ENCODE measurements at regions of chr16 and their contacts with region 1.

Region 1: GRCh38 chr16:12535535-12536411 is 267.9 kb downstream of the CPPED1 start:
- DNase-seq: peak in 4 of 9 donors; percentile 23 to 46 (median 37)
- ATAC-seq: peak; percentile 40
- H3K4me3 ChIP-seq: no peak overlapping the region
- H3K4me3 Mint-ChIP-seq: peak overlapping the region in 9 of 10 donors; percentile 7 to 70 (median 50)
- H3K27ac ChIP-seq: no peak overlapping the region
- H3K27ac Mint-ChIP-seq: peak overlapping the region in 5 of 9 donors; percentile 5 to 94 (median 68)
- H3K4me1 ChIP-seq: peaks cover 15 to 40% of the 10 kb centered on the region in 2 donors
- H3K4me1 Mint-ChIP-seq: peaks cover 44 to 96% (median 72%) of the 10 kb centered on the region in 7 donors
- H3K27me3 ChIP-seq: no peaks in the 10 kb centered on the region
- H3K27me3 Mint-ChIP-seq: no peaks in the 10 kb centered on the region

Region 2: GRCh38 chr16:12089492-12090150 is 446.2 kb before region 1 on chr16:
- CTCF ChIA-PET with region 1: no interaction called
- POLR2A ChIA-PET with region 1: no interaction called
- intact Hi-C with region 1: loop called in 1 of 2 experiments (anchors 10 kb)
- DNase-seq: peak; percentile 20 to 60 (median 49)
- ATAC-seq: peak; percentile 89
- H3K4me3 ChIP-seq: peak overlapping the region; percentile 71
- H3K4me3 Mint-ChIP-seq: peak overlapping the region; percentile 81 to 98 (median 86)
- H3K27ac ChIP-seq: peak overlapping the region; percentile 76
- H3K27ac Mint-ChIP-seq: peak overlapping the region; percentile 87 to 99 (median 97)
- H3K4me1 ChIP-seq: peaks cover 0 to 30% of the 10 kb centered on the region in 2 donors
- H3K4me1 Mint-ChIP-seq: peaks cover 25 to 63% (median 57%) of the 10 kb centered on the region in 7 donors
- H3K27me3 ChIP-seq: no peaks in the 10 kb centered on the region
- H3K27me3 Mint-ChIP-seq: no peaks in the 10 kb centered on the region

Region 3: GRCh38 chr16:12455287-12455798 is 80.4 kb before region 1 on chr16:
- CTCF ChIA-PET with region 1: interaction called, 6 read pairs
- POLR2A ChIA-PET with region 1: no interaction called
- intact Hi-C with region 1: loop called in 1 of 2 experiments (anchors 5 kb)
- DNase-seq: peak in 6 of 9 donors; percentile 19 to 55 (median 22)
- ATAC-seq: peak; percentile 54
- H3K4me3 ChIP-seq: no peak overlapping the region
- H3K4me3 Mint-ChIP-seq: no peak overlapping the region
- H3K27ac ChIP-seq: no peak overlapping the region
- H3K27ac Mint-ChIP-seq: peak overlapping the region in 3 of 9 donors; percentile 19 to 43 (median 26)
- H3K4me1 ChIP-seq: peaks cover 0 to 24% of the 10 kb centered on the region in 2 donors
- H3K4me1 Mint-ChIP-seq: peaks cover 28 to 44% (median 35%) of the 10 kb centered on the region in 7 donors
- H3K27me3 ChIP-seq: no peaks in the 10 kb centered on the region
- H3K27me3 Mint-ChIP-seq: no peaks in the 10 kb centered on the region

Region 4: GRCh38 chr16:12551530-12551929 is 15.8 kb after region 1 on chr16:
- CTCF ChIA-PET with region 1: no interaction called
- POLR2A ChIA-PET with region 1: no interaction called
- intact Hi-C with region 1: loop called in 1 of 2 experiments (anchors 2 kb)
- DNase-seq: peak in 6 of 9 donors; percentile 13 to 55 (median 47)
- ATAC-seq: peak; percentile 58
- H3K4me3 ChIP-seq: no peak overlapping the region
- H3K4me3 Mint-ChIP-seq: peak overlapping the region in 6 of 10 donors; percentile 24 to 54 (median 39)
- H3K27ac ChIP-seq: no peak overlapping the region
- H3K27ac Mint-ChIP-seq: peak overlapping the region in 6 of 9 donors; percentile 11 to 64 (median 42)
- H3K4me1 ChIP-seq: peaks cover 0 to 10% of the 10 kb centered on the region in 2 donors
- H3K4me1 Mint-ChIP-seq: peaks cover 19 to 69% (median 45%) of the 10 kb centered on the region in 7 donors
- H3K27me3 ChIP-seq: no peaks in the 10 kb centered on the region
- H3K27me3 Mint-ChIP-seq: no peaks in the 10 kb centered on the region

Region 5: GRCh38 chr16:12617401-12617819 is 81.6 kb after region 1 on chr16:
- CTCF ChIA-PET with region 1: no interaction called
- POLR2A ChIA-PET with region 1: no interaction called
- intact Hi-C with region 1: no loop called
- DNase-seq: no peak
- ATAC-seq: no peak
- H3K4me3 ChIP-seq: no peak overlapping the region
- H3K4me3 Mint-ChIP-seq: no peak overlapping the region
- H3K27ac ChIP-seq: no peak overlapping the region
- H3K27ac Mint-ChIP-seq: no peak overlapping the region
- H3K4me1 ChIP-seq: no peaks in the 10 kb centered on the region
- H3K4me1 Mint-ChIP-seq: peaks cover 12 to 27% (median 13%) of the 10 kb centered on the region in 7 donors
- H3K27me3 ChIP-seq: no peaks in the 10 kb centered on the region
- H3K27me3 Mint-ChIP-seq: peaks cover 0 to 7% (median 0%) of the 10 kb centered on the region in 5 donors

Region 6: GRCh38 chr16:12646490-12647274 is 110.9 kb after region 1 on chr16:
- CTCF ChIA-PET with region 1: no interaction called
- POLR2A ChIA-PET with region 1: no interaction called
- intact Hi-C with region 1: loop called in 1 of 2 experiments (anchors 1 kb)
- DNase-seq: peak in 5 of 9 donors; percentile 13 to 39 (median 31)
- ATAC-seq: peak; percentile 37
- H3K4me3 ChIP-seq: no peak overlapping the region
- H3K4me3 Mint-ChIP-seq: peak overlapping the region in 6 of 10 donors; percentile 20 to 63 (median 34)
- H3K27ac ChIP-seq: peak overlapping the region; percentile 1
- H3K27ac Mint-ChIP-seq: peak overlapping the region in 3 of 9 donors; percentile 11 to 95 (median 56)
- H3K4me1 ChIP-seq: peaks cover 0 to 9% of the 10 kb centered on the region in 2 donors
- H3K4me1 Mint-ChIP-seq: peaks cover 13 to 30% (median 20%) of the 10 kb centered on the region in 7 donors
- H3K27me3 ChIP-seq: no peaks in the 10 kb centered on the region
- H3K27me3 Mint-ChIP-seq: peaks cover 0 to 5% (median 0%) of the 10 kb centered on the region in 5 donors

Region 7: DNA sequence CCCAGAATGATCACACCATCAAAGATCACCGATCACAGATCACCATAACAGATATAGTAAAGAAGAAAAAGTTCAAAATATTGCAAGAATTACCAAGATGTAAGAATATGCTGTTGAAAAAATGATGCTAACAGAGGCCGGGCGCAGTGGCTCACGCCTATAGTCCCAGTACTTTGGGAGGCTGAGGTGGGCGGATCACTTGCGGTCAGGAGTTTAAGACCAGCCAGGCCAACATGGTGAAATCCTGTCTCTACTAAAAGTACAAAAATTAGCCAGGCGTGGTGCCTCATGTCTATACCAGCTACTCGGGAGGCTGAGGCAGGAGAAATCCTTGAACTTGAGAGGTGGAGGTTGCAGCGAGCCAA is 214.8 kb after region 1 on chr16:
- CTCF ChIA-PET with region 1: no interaction called
- POLR2A ChIA-PET with region 1: no interaction called
- intact Hi-C with region 1: loop called in 1 of 2 experiments (anchors 5 kb)
- DNase-seq: no peak
- ATAC-seq: no peak
- H3K4me3 ChIP-seq: no peak overlapping the region
- H3K4me3 Mint-ChIP-seq: peak overlapping the region in 1 of 10 donors; percentile 65
- H3K27ac ChIP-seq: no peak overlapping the region
- H3K27ac Mint-ChIP-seq: peak overlapping the region in 1 of 9 donors; percentile 89
- H3K4me1 ChIP-seq: no peaks in the 10 kb centered on the region
- H3K4me1 Mint-ChIP-seq: peaks cover 0 to 34% (median 6%) of the 10 kb centered on the region in 7 donors
- H3K27me3 ChIP-seq: no peaks in the 10 kb centered on the region
- H3K27me3 Mint-ChIP-seq: no peaks in the 10 kb centered on the region

Measured in naive thymus-derived CD4-positive, alpha-beta T cell (primary cell).